PC-9 (cell line): ENCODE measurements at regions of chr6 and their contacts with region 1.

Region 1: GRCh38 chr6:52399511-52400312 is 20.4 kb upstream of the EFHC1 start:
- DNase-seq: peak in 1 of 2 experiments; percentile 27
- H3K4me3 ChIP-seq: no peak overlapping the region
- H3K27ac ChIP-seq: no peak overlapping the region
- H3K4me1 ChIP-seq: 0 out of 2 replicates have a peak, but pooled peaks cover 6% of the 10 kb centered on the region
- H3K27me3 ChIP-seq: no peaks in the 10 kb centered on the region
- CTCF ChIP-seq: peak; percentile 95

Region 2: DNA sequence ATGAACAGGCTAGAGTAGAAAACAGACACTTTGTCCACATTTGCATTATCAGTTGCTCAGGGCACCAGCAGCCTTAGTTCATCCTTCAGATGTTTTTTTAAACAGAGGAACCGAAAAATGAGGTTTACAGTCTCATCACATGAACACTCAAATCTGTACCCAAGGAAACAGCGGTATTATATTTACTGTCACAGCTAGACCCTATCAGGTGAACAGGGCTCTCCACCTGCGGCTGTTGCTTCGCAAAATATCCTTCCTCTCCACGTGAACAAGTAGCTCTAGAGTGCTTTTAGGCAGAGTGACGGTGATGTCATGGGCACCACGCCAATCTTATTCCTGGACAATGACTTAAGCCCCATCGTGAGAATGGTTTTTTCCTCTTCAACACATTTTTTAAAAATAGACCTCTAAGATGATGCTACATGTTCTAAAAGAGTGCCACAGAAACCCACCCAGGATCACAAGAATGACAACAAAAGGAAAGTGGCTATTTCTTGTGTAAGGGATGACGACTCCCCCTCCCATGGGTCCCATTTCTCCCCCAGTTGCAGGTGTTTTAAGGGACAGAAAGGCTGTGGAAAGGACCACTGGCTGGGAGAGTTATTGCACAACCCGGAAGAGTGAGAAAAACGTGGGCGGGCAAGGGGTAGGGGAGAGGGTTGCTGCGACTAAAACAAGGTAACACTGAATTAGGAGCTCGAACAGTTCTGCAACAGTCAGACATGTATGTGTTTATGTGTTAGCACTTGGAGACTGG is 98.1 kb after region 1 on chr6:
- CTCF ChIA-PET with region 1: no interaction called
- POLR2A ChIA-PET with region 1: no interaction called
- intact Hi-C with region 1: no loop called
- DNase-seq: no peak
- H3K4me3 ChIP-seq: no peak overlapping the region
- H3K27ac ChIP-seq: no peak overlapping the region
- H3K4me1 ChIP-seq: peaks cover 10% of the 10 kb centered on the region
- H3K27me3 ChIP-seq: no peaks in the 10 kb centered on the region
- CTCF ChIP-seq: no peak

Region 3: GRCh38 chr6:52712136-52712535 is 312.4 kb after region 1 on chr6:
- CTCF ChIA-PET with region 1: interaction called, 10 read pairs
- POLR2A ChIA-PET with region 1: no interaction called
- intact Hi-C with region 1: no loop called
- DNase-seq: no peak
- H3K4me3 ChIP-seq: no peak overlapping the region
- H3K27ac ChIP-seq: no peak overlapping the region
- H3K4me1 ChIP-seq: no peaks in the 10 kb centered on the region
- H3K27me3 ChIP-seq: no peaks in the 10 kb centered on the region
- CTCF ChIP-seq: no peak